H1 (cell line): ENCODE measurements at regions of chr14 and their contacts with region 1.

Region 1: GRCh38 chr14:100383727-100384158 is 60.6 kb downstream of the SLC25A47 start:
- DNase-seq: peak in 1 of 2 experiments; percentile 87
- H3K4me3 ChIP-seq: no peak overlapping the region
- H3K27ac ChIP-seq: no peak overlapping the region
- H3K4me1 ChIP-seq: peaks cover 0 to 9% (median 0%) of the 10 kb centered on the region in 4 experiments; a peak in 3 of 7 replicates
- H3K27me3 ChIP-seq: no peaks in the 10 kb centered on the region
- CTCF ChIP-seq: peak; percentile 93 to 97 (median 97)
- EP300 ChIP-seq: no peak
- POLR2A ChIP-seq: no peak
- RAD21 ChIP-seq: peak; percentile 88 to 89

Region 2: DNA sequence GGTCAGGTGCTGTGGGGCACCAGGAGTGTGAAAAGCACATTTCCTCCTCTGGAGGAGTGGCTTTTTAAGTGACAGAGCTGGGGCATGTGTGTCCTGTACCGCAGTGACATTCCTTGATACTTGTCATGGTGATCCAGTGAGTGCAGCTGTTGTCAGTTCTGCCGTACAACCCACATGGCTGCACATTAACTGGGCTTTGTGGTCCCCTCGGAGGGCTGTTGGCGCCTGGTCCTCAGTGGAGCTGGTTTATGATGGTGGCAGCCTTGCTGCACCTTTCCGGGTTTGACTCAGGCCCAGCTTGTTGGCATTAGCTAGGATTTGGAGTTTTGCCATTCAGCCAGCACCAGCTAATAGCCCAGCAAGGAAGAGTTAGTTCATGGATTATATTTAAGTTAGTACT is 16.4 kb after region 1 on chr14:
- CTCF ChIA-PET with region 1: interaction called, 39 read pairs
- POLR2A ChIA-PET with region 1: interaction called, 3 read pairs
- DNase-seq: no peak
- H3K4me3 ChIP-seq: no peak overlapping the region
- H3K27ac ChIP-seq: no peak overlapping the region
- H3K4me1 ChIP-seq: peaks cover 3 to 8% (median 7%) of the 10 kb centered on the region in 4 experiments
- H3K27me3 ChIP-seq: no peaks in the 10 kb centered on the region
- CTCF ChIP-seq: no peak
- EP300 ChIP-seq: no peak
- POLR2A ChIP-seq: no peak
- RAD21 ChIP-seq: no peak

Region 3: GRCh38 chr14:100417466-100417865 is 33.7 kb after region 1 on chr14:
- CTCF ChIA-PET with region 1: interaction called, 119 read pairs
- POLR2A ChIA-PET with region 1: interaction called, 3 read pairs
- DNase-seq: peak; percentile 58 to 78
- H3K4me3 ChIP-seq: no peak overlapping the region
- H3K27ac ChIP-seq: no peak overlapping the region
- H3K4me1 ChIP-seq: peaks cover 0 to 9% (median 3%) of the 10 kb centered on the region in 4 experiments; a peak in 5 of 7 replicates
- H3K27me3 ChIP-seq: no peaks in the 10 kb centered on the region
- CTCF ChIP-seq: peak; percentile 83 to 98 (median 84)
- EP300 ChIP-seq: no peak
- POLR2A ChIP-seq: no peak
- RAD21 ChIP-seq: peak; percentile 90 to 92

Region 4: DNA sequence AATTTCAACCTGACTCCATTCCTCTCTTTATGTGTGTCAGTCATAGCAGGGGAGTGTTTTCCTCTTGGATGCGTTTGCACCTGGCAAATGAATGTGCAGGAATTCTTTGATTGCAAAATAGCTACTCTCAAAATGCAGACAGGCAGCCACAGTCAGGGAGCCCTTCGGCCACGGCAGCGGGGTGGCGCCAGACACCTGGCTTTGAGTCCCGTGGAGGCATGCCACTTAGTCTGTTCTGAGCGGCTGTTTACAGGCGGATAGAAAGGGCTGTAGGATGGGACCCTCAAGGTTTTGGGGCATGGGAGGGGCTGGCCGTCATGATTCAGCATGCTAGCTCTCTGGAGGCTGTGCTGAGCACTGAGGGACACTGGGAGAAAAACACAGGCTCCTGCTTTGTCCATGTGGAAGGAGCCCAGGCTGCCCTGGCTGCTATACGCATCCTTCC is 56.5 kb after region 1 on chr14:
- CTCF ChIA-PET with region 1: interaction called, 50 read pairs
- POLR2A ChIA-PET with region 1: no interaction called
- DNase-seq: peak; percentile 31 to 75
- H3K4me3 ChIP-seq: no peak overlapping the region
- H3K27ac ChIP-seq: no peak overlapping the region
- H3K4me1 ChIP-seq: peaks cover 0 to 6% (median 4%) of the 10 kb centered on the region in 4 experiments; a peak in 4 of 7 replicates
- H3K27me3 ChIP-seq: no peaks in the 10 kb centered on the region
- CTCF ChIP-seq: peak; percentile 79 to 84 (median 79)
- EP300 ChIP-seq: no peak
- POLR2A ChIP-seq: no peak
- RAD21 ChIP-seq: peak; percentile 91 to 92

Region 5: DNA sequence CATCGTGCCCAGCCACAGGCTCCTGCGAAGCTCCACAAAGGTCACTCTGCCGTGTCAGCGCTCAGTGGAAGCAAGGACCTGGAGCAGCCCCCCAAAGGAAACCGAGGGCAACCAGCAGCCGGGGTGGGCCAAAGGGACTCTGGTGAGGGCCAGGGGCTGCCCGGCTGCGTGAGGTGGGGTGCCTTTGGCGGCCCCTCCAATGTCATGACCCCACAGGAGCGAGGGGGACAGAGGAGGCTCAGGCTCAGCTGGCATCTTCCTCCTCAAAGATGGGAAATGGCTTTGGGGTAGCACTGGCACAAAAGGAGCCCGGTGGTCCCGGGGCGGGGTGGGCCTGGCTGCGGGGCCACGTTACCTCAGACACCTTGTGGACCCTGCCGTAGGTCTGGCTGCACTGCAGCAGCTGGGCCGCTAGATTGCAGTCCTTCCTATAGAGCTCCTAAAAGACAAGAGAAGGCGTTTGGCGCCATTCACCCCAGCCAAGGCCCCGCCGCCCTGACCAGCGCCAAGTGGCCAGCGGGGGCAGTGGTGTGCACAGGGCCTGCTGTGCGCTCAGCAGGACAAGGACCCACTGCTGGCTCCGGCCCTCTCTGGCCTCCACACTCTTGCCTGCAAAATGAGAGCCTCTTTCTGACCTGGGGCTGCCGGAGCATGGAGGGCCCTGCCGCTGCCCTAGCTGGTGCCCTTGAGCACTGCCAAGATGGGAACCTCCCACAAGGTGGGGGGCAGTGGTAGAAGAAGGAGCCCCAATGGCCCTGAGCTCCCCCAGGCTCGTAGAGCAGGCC is 156.6 kb after region 1 on chr14:
- CTCF ChIA-PET with region 1: interaction called, 22 read pairs
- POLR2A ChIA-PET with region 1: no interaction called
- DNase-seq: peak in 1 of 2 experiments; percentile 17
- H3K4me3 ChIP-seq: no peak overlapping the region
- H3K27ac ChIP-seq: no peak overlapping the region
- H3K4me1 ChIP-seq: peaks cover 1 to 5% (median 3%) of the 10 kb centered on the region in 4 experiments; a peak in 3 of 7 replicates
- H3K27me3 ChIP-seq: no peaks in the 10 kb centered on the region; a peak in 1 of 7 replicates
- CTCF ChIP-seq: peak in 2 of 3 experiments; percentile 73 to 78; a peak in 3 of 4 replicates
- EP300 ChIP-seq: no peak
- POLR2A ChIP-seq: no peak
- RAD21 ChIP-seq: peak; percentile 37 to 47